AG04450 (cell line): ENCODE measurements at regions of chr10 and their contacts with region 1.

Region 1: GRCh38 chr10:98170249-98171117 is 36.0 kb downstream of the R3HCC1L start:
- DNase-seq: peak; percentile 20
- H3K4me3 ChIP-seq: no peak overlapping the region
- H3K27ac ChIP-seq: no peak overlapping the region
- H3K27me3 ChIP-seq: no peaks in the 10 kb centered on the region
- CTCF ChIP-seq: peak; percentile 76

Region 2: GRCh38 chr10:97898429-97898828 is 272.1 kb before region 1 on chr10:
- CTCF ChIA-PET with region 1: no interaction called
- POLR2A ChIA-PET with region 1: no interaction called
- DNase-seq: no peak
- H3K4me3 ChIP-seq: no peak overlapping the region
- H3K27ac ChIP-seq: no peak overlapping the region
- H3K27me3 ChIP-seq: peaks cover 8% of the 10 kb centered on the region
- CTCF ChIP-seq: no peak

Region 3: GRCh38 chr10:98150544-98150943 is 19.9 kb before region 1 on chr10:
- CTCF ChIA-PET with region 1: interaction called, 19 read pairs
- POLR2A ChIA-PET with region 1: no interaction called
- DNase-seq: peak; percentile 44
- H3K4me3 ChIP-seq: no peak overlapping the region
- H3K27ac ChIP-seq: no peak overlapping the region
- H3K27me3 ChIP-seq: no peaks in the 10 kb centered on the region
- CTCF ChIP-seq: no peak

Region 4: GRCh38 chr10:98186681-98187080 is 16.2 kb after region 1 on chr10:
- CTCF ChIA-PET with region 1: interaction called, 18 read pairs
- POLR2A ChIA-PET with region 1: no interaction called
- DNase-seq: peak; percentile 6
- H3K4me3 ChIP-seq: no peak overlapping the region
- H3K27ac ChIP-seq: no peak overlapping the region
- H3K27me3 ChIP-seq: no peaks in the 10 kb centered on the region
- CTCF ChIP-seq: no peak

Region 5: DNA sequence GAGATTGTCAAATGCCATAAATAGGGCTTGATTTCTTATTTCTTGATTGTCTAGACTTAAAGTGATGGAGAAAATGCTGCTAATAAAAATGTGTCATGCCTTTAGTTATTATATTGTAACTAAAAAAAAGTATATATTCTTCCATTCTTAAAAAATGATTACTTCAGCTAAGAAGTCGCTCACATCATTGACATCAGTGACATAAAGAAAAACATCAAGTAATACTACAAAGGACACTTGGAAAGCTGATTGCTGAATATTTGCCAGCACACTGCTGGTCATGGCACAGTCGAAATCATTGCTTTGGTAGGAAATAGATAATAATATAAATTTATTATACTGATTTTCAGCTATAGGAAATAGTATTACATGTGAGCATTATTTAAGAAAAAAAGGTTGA is 34.9 kb after region 1 on chr10:
- CTCF ChIA-PET with region 1: interaction called, 18 read pairs
- POLR2A ChIA-PET with region 1: no interaction called
- DNase-seq: no peak
- H3K4me3 ChIP-seq: no peak overlapping the region
- H3K27ac ChIP-seq: no peak overlapping the region
- H3K27me3 ChIP-seq: no peaks in the 10 kb centered on the region
- CTCF ChIP-seq: no peak